Prostate gland (tissue), 2 donors: ENCODE measurements at regions of chr17 and their contacts with region 1.

Region 1: GRCh38 chr17:4004517-4005295 is 40.5 kb upstream of the ATP2A3 start:
- DNase-seq: peak; percentile 76
- H3K4me3 ChIP-seq: no peak overlapping the region
- H3K27ac ChIP-seq: peak overlapping the region; percentile 38 to 65
- H3K4me1 ChIP-seq: no peaks in the 10 kb centered on the region
- H3K27me3 ChIP-seq: no peaks in the 10 kb centered on the region
- CTCF ChIP-seq: peak; percentile 84 to 99 (median 98)
- POLR2A ChIP-seq: no peak

Region 2: DNA sequence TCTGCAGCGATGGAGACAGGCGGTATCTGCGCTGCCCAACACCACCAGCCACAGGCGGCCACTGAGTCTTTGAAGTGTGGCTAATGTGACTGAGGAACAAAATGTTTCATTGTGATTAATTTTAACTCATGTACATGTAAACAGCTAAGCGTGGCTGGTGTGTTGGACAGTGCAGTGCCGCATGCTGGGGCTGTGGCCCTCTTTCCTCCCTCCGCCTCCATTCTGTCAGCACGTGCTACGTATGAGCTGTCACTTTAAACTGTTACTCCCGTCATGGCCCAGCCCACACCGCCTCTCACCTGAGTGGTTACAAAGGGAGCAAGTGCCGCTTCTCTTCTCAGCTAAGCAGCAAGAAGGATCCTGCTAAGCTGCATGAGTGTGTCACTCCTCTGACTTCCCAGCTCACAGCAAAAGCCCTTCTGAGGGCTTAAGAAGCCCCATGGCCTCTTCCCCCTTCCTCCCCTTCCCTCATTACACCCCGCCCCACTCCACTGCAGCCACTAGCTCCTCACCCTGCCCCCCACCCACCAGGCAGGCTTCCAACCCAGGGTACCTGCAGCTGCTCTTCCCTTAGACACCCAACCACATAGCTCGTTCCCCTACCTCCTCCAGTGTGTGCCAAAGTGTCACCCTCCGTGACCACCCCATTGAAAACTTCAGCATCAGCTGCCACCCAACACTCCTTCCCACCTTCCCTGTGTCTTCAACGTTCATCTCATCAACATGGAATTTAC is 266.0 kb before region 1 on chr17:
- intact Hi-C with region 1: loop called (anchors 5 kb)
- DNase-seq: peak; percentile 58
- H3K4me3 ChIP-seq: peak overlapping the region; percentile 2 to 11
- H3K27ac ChIP-seq: peak overlapping the region; percentile 44 to 59
- H3K4me1 ChIP-seq: no peaks in the 10 kb centered on the region
- H3K27me3 ChIP-seq: no peaks in the 10 kb centered on the region
- CTCF ChIP-seq: no peak
- POLR2A ChIP-seq: no peak

Region 3: DNA sequence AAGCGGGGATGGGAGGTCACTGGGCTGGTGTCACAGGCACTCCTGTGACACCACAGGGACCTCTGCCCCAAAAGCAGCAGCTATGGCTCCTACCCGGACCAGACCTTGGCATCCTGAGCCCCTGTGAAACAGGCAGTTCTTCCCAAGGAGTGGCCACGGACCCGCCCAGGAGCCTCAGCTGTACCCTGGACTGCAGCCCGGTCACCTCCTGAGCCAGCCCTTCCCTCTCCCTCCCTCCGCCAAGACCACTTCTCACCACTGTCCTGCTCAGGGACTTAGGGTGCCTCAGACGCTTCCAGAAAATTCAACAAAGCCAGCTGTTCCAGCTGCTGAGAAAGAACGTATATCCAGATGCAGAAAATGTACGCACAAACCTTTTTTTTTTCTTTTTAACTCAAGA is 144.8 kb before region 1 on chr17:
- intact Hi-C with region 1: loop called (anchors 5 kb)
- DNase-seq: no peak
- H3K4me3 ChIP-seq: no peak overlapping the region
- H3K27ac ChIP-seq: no peak overlapping the region
- H3K4me1 ChIP-seq: no peaks in the 10 kb centered on the region
- H3K27me3 ChIP-seq: no peaks in the 10 kb centered on the region
- CTCF ChIP-seq: no peak
- POLR2A ChIP-seq: no peak

Region 4: GRCh38 chr17:3913531-3914311 is 91.0 kb before region 1 on chr17:
- intact Hi-C with region 1: loop called (anchors 5 kb)
- DNase-seq: peak; percentile 63
- H3K4me3 ChIP-seq: no peak overlapping the region
- H3K27ac ChIP-seq: no peak overlapping the region
- H3K4me1 ChIP-seq: no peaks in the 10 kb centered on the region
- H3K27me3 ChIP-seq: no peaks in the 10 kb centered on the region
- CTCF ChIP-seq: peak; percentile 82 to 95 (median 89)
- POLR2A ChIP-seq: no peak